ENCODE measurements at regions of chr6 and their contacts with region 1.

Region 1: DNA sequence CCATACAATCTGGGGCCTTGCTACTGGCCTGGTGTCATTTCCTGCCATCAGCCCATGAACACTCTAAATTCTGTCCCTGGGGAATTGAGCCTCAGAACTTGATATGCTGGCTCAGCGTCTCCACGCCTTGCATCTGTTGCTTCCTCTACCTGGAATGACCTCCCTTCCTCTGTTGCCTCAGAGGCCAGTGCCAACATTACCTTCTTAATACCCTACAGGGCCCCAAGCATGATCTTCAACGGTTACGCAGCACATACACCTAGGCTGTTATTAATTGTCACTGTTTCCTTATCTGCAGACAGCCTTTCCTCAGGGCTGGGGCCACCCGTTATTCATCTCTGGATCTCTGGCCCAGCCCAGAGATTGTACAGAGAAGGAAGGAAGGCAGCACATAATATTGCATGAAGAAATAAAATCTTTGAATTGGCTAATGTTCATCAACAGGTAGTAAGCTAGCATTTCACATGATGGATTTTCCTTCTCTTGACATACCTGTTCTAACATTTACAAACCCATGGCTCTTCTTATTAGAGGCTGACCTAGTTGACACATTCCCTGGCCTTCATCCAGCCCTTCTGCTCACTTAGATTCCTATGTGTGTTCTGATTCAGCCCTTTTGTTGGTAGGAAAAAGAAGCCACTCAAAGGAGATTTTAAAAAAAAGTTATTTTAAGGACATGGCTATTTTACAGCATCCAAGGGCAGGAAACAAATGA is 8.4 kb upstream of the RNF182 start:
- DNase-seq: no peak
- H3K4me3 ChIP-seq: no peak overlapping the region
- H3K27ac ChIP-seq: no peak overlapping the region
- H3K4me1 ChIP-seq: no peaks in the 10 kb centered on the region
- H3K27me3 ChIP-seq: peaks cover 60% of the 10 kb centered on the region
- CTCF ChIP-seq: no peak
- EP300 ChIP-seq: no peak
- POLR2A ChIP-seq: no peak

Region 2: GRCh38 chr6:14059791-14060444 is 143.5 kb after region 1 on chr6:
- in situ Hi-C with region 1: no loop called
- intact Hi-C with region 1: loop called (anchors 5 kb)
- DNase-seq: no peak
- H3K4me3 ChIP-seq: no peak overlapping the region
- H3K27ac ChIP-seq: no peak overlapping the region
- H3K4me1 ChIP-seq: no peaks in the 10 kb centered on the region
- H3K27me3 ChIP-seq: peaks cover 40% of the 10 kb centered on the region
- CTCF ChIP-seq: no peak
- EP300 ChIP-seq: no peak
- POLR2A ChIP-seq: no peak

Region 3: GRCh38 chr6:14144678-14145113 is 228.3 kb after region 1 on chr6:
- in situ Hi-C with region 1: loop called in 2 of 4 experiments (anchors 10 to 25 kb)
- intact Hi-C with region 1: no loop called
- DNase-seq: peak; percentile 67
- H3K4me3 ChIP-seq: no peak overlapping the region
- H3K27ac ChIP-seq: no peak overlapping the region
- H3K4me1 ChIP-seq: no peaks in the 10 kb centered on the region
- H3K27me3 ChIP-seq: no peaks in the 10 kb centered on the region
- CTCF ChIP-seq: peak; percentile 85 to 96 (median 95)
- EP300 ChIP-seq: no peak
- POLR2A ChIP-seq: no peak

Measured in transverse colon (tissue), 4 donors.